Aorta (tissue), 5 donors: ENCODE measurements at regions of chr7 and their contacts with region 1.

Region 1: DNA sequence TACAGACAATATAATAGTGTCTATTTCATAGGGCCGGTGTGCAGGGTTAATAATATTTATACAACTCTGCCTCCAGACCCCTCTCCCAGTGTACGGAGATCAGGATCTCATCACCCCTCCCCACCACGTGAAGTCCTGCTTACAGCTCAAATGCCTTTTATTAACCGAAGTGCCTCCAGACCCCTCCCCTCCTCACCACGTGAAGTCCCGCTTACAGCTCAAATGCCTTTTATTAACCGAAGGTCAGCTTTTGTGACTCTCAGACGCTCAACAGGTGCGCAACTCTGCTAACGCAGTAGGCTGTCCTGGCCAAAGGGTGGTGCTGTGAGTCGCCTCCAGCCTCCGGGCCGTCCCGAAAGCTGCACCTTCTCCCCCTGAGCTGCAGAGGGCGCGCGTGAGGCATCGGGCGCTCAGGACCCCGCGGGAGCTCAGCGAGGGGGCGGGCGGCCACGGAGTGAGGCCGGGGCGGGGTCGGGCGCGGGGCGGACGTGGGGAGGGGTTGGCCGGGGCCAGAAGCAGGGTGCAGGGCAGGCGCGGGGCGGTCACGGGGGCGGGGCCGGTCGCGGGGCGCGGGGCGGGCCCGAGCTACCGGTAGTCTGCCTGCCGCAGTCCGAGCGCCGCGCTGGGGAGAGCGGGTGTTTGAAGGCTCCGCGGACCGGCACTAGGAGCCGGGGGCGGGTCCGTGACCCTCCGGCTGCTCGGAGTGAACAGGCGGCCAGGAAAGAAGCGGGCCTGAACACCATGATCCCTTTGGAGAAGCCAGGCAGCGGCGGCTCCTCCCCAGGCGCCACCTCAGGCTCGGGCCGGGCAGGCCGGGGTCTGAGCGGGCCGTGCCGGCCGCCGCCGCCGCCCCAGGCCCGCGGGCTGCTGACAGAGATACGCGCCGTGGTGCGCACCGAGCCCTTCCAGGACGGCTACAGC is at the start of gene STK17A:
- DNase-seq: peak; percentile 93 to 98
- ATAC-seq: peak; percentile 98
- H3K4me3 ChIP-seq: peak within 1 kb of the TSS; percentile 69 to 90
- H3K27ac ChIP-seq: peak within 1 kb of the TSS; percentile 87 to 95
- H3K4me1 ChIP-seq: no peaks in the 10 kb centered on the region
- H3K27me3 ChIP-seq: no peaks in the 10 kb centered on the region
- total RNA-seq, gene STK17A: 38.8 to 40.6 TPM

Region 2: DNA sequence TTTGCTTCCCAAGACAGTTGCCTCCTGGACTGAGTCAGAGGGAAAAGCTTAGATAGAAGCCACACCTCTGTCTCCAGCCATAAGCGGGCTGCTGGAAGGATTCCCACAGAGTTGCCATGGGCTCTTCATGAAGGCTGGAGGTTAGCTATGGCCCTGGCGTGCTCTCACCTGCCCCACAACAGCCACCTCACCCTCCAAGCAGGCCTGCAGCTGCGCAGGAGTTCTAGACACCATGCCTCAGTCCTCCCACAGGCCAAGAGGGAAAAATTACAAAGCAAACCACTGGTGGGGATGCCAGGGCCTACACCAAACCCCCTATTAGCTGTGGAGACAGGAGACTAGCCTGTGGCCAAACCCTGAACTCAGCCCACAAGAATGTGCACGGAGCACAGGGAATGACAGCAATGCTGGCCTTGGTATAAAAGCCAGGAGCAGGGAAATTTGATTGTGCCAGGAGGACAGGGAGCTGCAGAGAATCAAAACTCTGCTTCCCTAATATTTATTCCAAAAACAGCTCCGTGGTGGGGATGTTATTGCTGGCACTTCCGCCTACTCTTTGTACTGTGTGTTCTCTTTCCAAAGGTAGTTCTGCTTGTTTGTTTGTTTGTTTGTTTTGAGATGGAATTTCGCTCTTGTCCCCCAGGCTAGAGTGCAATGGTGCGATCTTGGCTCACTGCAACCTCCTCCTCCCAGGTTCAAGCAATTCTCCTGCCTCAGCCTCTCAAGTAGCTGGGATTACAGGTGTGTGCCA is 60.2 kb before region 1 on chr7:
- intact Hi-C with region 1: no loop called
- DNase-seq: no peak
- ATAC-seq: no peak
- H3K4me3 ChIP-seq: no peak overlapping the region
- H3K27ac ChIP-seq: no peak overlapping the region
- H3K4me1 ChIP-seq: no peaks in the 10 kb centered on the region
- H3K27me3 ChIP-seq: no peaks in the 10 kb centered on the region

Region 3: DNA sequence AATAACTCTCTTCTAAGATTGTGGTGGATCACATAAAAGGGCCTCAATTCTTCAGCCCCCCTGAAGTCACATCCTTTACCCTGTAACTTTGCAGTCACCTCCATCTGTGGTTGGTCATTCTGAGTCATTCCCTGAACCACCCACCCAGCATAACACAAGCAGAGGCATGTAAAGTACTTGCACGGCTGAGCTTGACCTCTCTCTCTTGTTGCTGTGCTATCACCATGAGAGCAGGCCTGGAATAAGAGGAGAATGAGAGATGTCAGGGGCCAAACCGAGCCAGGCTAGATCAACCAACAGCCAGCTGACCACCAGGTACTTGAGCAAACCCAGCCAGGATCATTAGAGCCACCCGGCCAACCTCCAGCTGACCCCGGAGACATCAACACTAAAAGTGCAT is 13.3 kb before region 1 on chr7:
- intact Hi-C with region 1: no loop called
- DNase-seq: no peak
- ATAC-seq: no peak
- H3K4me3 ChIP-seq: no peak overlapping the region
- H3K27ac ChIP-seq: no peak overlapping the region
- H3K4me1 ChIP-seq: no peaks in the 10 kb centered on the region
- H3K27me3 ChIP-seq: no peaks in the 10 kb centered on the region

Region 4: DNA sequence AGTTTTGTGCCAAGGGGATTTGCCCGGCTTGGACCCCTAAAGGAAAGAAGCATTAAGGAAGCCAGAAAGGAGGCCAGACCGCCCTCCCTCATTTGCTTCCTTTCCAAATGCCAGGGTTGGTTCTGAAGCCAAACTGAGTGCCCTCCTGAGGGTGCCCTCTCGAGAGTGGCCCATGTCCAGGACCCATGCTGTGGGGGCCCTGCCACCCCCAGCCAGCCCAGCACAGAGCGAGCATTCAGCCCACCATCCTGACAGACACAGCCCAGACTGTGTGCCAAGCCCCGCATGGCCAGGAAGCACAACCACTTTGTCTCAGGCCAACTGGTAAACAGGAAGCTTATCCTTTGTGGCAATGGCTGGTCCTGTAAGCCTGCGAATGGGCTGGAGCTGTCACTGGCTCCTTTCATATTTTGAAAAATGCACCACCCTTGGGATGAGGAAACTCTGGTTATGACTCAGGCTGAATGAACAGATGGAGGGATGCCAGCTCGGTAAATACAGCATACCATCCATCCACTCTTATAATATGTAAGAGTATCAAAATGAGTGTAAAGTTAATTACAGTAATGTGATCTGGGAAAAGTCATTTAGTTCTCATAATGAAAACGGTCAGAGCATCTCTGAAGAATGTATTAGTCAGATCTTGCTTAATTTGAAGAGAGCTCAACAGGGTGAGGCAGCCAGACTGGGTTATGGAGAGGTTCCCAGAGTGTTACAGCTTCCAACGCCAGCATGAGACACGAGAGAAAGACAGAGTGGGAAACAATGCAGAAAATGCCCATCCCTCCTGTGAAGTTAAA is 65.1 kb after region 1 on chr7:
- intact Hi-C with region 1: loop called (anchors 2 to 5 kb)
- DNase-seq: peak; percentile 83 to 85
- ATAC-seq: peak; percentile 81
- H3K4me3 ChIP-seq: no peak overlapping the region
- H3K27ac ChIP-seq: peak overlapping the region; percentile 99 to 100
- H3K4me1 ChIP-seq: peaks cover 12 to 14% of the 10 kb centered on the region in 2 donors
- H3K27me3 ChIP-seq: no peaks in the 10 kb centered on the region

Region 5: GRCh38 chr7:43700059-43700501 is 117.3 kb after region 1 on chr7:
- intact Hi-C with region 1: loop called (anchors 1 kb)
- DNase-seq: no peak
- ATAC-seq: peak; percentile 85
- H3K4me3 ChIP-seq: no peak overlapping the region
- H3K27ac ChIP-seq: no peak overlapping the region
- H3K4me1 ChIP-seq: peaks cover 0 to 4% of the 10 kb centered on the region in 2 donors
- H3K27me3 ChIP-seq: no peaks in the 10 kb centered on the region

Region 6: GRCh38 chr7:43721193-43721806 is 138.5 kb after region 1 on chr7:
- intact Hi-C with region 1: loop called (anchors 1 to 5 kb)
- DNase-seq: no peak
- ATAC-seq: no peak
- H3K4me3 ChIP-seq: no peak overlapping the region
- H3K27ac ChIP-seq: no peak overlapping the region
- H3K4me1 ChIP-seq: no peaks in the 10 kb centered on the region
- H3K27me3 ChIP-seq: no peaks in the 10 kb centered on the region

Region 7: DNA sequence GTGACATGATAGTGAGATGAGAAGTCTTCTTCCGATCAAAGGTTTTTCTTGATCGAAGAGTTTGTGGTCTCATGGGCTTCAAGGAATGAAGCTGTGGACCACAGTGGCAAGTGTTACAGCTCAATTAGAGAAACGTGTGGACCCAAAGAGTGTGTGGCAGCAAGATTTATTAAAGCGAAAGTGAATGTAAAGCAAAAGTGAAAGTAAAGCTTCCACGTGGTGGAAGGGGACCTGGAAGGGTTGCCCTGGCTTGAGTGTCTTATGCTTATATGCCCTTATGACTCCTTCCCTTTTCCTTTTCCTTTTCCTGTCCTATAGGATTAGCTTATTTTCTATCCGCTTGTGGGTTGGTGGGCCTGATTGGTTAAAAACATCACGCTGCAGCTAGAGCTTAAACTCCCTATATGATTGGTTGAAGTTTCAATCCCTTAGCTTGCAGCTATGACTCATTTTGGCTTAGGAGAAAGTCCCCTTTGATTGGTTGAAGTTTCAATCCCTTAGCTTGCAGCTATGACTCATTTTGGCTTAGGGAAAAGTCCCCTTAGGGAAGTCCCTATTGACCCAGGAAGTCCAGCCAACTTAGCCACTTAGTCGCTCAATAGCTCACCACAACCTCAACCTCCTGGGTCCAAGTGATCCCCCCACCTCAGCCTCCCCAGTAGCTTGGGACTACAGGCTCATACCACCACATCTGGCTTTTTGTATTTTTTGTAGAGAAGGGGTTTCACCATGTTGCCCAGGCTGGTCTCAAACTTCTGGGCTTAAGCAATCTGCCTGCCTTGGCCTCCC is 251.9 kb after region 1 on chr7:
- intact Hi-C with region 1: loop called (anchors 2 to 5 kb)
- DNase-seq: no peak
- ATAC-seq: no peak
- H3K4me3 ChIP-seq: no peak overlapping the region
- H3K27ac ChIP-seq: no peak overlapping the region
- H3K4me1 ChIP-seq: no peaks in the 10 kb centered on the region
- H3K27me3 ChIP-seq: no peaks in the 10 kb centered on the region

Region 8: GRCh38 chr7:44291066-44291732 is 708.4 kb after region 1 on chr7:
- intact Hi-C with region 1: no loop called
- DNase-seq: peak; percentile 77 to 79
- ATAC-seq: no peak
- H3K4me3 ChIP-seq: no peak overlapping the region
- H3K27ac ChIP-seq: no peak overlapping the region
- H3K4me1 ChIP-seq: no peaks in the 10 kb centered on the region
- H3K27me3 ChIP-seq: no peaks in the 10 kb centered on the region